Prostate gland (tissue), 2 donors: ENCODE measurements at regions of chrX and their contacts with region 1.

Region 1: GRCh38 chrX:43939187-43939926 is 33.8 kb downstream of the NDP start:
- DNase-seq: no peak
- H3K4me3 ChIP-seq: no peak overlapping the region
- H3K27ac ChIP-seq: no peak overlapping the region
- H3K4me1 ChIP-seq: no peaks in the 10 kb centered on the region
- H3K27me3 ChIP-seq: no peaks in the 10 kb centered on the region
- CTCF ChIP-seq: peak in 2 of 4 experiments; percentile 8 to 30
- POLR2A ChIP-seq: no peak

Region 2: GRCh38 chrX:43836435-43837184 is 102.7 kb before region 1 on chrX:
- intact Hi-C with region 1: loop called (anchors 5 kb)
- DNase-seq: no peak
- H3K4me3 ChIP-seq: no peak overlapping the region
- H3K27ac ChIP-seq: no peak overlapping the region
- H3K4me1 ChIP-seq: no peaks in the 10 kb centered on the region
- H3K27me3 ChIP-seq: no peaks in the 10 kb centered on the region
- CTCF ChIP-seq: peak in 2 of 4 experiments; percentile 59 to 62
- POLR2A ChIP-seq: no peak

Region 3: DNA sequence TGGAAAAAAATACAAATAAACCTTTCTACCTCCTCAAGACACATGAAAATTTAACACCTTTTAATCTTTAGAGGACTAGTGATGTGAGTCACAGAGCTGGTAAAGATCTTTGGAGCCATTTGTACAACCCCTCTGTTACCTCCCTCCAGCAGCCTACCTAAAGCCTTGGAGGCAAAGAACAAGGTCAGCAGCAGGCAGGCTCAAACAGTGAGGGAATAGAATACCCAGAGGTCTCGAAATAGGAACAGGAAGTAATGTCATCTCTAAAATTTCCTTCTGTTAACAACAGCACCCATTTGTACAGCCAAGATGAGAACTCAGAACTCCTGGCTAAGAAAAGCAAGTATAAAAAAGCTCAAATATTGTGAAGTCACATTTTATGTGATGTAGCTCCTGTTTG is 46.9 kb before region 1 on chrX:
- intact Hi-C with region 1: loop called (anchors 2 kb)
- DNase-seq: no peak
- H3K4me3 ChIP-seq: no peak overlapping the region
- H3K27ac ChIP-seq: no peak overlapping the region
- H3K4me1 ChIP-seq: no peaks in the 10 kb centered on the region
- H3K27me3 ChIP-seq: no peaks in the 10 kb centered on the region
- CTCF ChIP-seq: no peak
- POLR2A ChIP-seq: no peak

Region 4: DNA sequence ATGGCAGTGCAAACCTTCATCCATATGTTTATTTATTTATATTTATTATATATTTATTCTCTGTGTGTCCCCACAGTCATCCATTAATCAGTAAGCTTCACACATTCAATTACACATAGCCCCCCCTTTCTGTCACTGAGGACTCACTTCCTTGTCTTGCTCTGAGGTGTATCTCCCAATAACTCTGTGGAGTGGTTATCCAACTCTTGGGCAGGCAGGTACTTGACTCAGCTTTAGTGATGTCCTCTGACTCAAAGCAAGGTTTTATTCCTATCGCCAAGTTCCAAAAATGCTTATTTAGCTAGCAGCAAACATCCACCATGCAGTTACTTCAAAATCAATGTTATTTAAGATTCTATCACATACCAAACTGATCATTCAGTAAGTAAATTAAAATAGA is 59.0 kb after region 1 on chrX:
- intact Hi-C with region 1: no loop called
- DNase-seq: no peak
- H3K4me3 ChIP-seq: no peak overlapping the region
- H3K27ac ChIP-seq: no peak overlapping the region
- H3K4me1 ChIP-seq: no peaks in the 10 kb centered on the region
- H3K27me3 ChIP-seq: no peaks in the 10 kb centered on the region
- CTCF ChIP-seq: no peak
- POLR2A ChIP-seq: no peak